HEK293 (cell line): ENCODE measurements at regions of chr17 and their contacts with region 1.

Region 1: DNA sequence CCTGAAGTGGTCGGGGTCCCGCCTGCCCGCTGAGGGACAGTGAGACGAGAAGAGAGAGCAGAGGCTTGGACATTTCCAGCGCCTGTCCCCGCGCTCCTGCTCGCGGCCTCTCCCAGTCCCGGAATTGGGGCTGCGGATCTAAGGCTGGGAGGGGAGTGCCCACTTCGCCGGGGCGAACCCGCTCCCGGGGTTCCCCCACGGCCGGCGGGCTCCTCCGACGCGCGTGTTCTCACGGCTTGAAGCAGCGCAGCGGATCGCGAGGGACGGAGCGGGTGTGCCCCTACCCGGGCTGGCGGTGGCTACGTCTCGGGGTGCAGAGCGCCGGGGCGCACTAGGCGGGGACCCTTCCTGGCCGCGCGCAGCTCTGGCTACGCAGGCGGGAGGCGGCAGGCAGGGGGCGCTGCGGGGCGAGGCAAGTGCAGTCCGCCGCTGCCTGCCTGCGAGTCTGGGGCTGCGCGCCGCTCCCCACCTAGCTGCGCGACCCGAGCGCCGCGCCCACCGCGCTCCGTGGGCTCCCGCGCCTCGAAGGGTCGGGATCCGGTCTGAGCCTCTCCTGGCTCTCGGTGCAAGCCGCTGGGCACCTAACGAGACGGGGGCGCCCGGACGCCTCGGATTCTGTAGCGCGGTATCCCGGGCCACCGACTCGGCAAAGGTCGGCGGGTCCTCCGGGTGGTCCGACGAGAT is 1.2 kb downstream of the NGFR start:
- H3K4me3 ChIP-seq: peak overlapping the region; percentile 51
- H3K27ac ChIP-seq: peak overlapping the region; percentile 27; the same call in 1 of the 2 replicates
- H3K4me1 ChIP-seq: peaks cover 13% of the 10 kb centered on the region
- CTCF ChIP-seq: peak; percentile 85

Region 2: DNA sequence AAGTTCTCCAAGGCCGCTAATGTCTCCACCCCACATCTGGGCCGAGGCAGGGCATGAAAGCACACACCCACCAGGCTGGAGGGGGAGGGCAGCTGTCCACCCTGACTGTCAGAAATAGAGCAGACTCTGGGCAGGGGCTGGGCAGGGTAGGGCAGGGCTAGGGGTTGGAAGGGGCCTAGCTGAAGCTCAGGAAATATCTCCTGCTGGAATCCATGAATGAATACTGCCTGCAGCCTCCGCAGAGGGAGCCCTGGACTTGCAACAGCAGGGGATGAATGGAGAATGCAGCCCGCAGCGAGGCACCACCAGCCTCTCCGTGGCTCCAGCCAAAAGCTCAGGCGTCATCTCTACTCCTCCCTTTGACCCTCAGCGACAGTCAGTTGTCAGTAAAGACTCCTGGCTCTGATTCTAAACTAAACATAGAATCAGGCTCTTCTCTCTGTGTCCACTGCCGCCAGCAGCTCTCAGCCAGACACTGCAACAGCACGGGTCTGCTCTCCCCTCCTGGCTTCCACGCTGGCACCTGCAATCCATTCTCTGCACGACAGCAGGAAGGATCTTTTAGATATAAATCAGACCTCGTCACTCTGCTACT is 25.1 kb before region 1 on chr17:
- CTCF ChIA-PET with region 1: interaction called, 12 read pairs
- POLR2A ChIA-PET with region 1: no interaction called
- H3K4me3 ChIP-seq: no peak overlapping the region
- H3K27ac ChIP-seq: no peak overlapping the region
- H3K4me1 ChIP-seq: no peaks in the 10 kb centered on the region
- CTCF ChIP-seq: no peak

Region 3: GRCh38 chr17:49508061-49508865 is 11.9 kb after region 1 on chr17:
- CTCF ChIA-PET with region 1: interaction called, 59 read pairs
- POLR2A ChIA-PET with region 1: interaction called, 32 read pairs
- H3K4me3 ChIP-seq: peak overlapping the region; percentile 4; the same call in 1 of the 2 replicates
- H3K27ac ChIP-seq: no peak overlapping the region
- H3K4me1 ChIP-seq: peaks cover 10% of the 10 kb centered on the region
- CTCF ChIP-seq: no peak

Region 4: DNA sequence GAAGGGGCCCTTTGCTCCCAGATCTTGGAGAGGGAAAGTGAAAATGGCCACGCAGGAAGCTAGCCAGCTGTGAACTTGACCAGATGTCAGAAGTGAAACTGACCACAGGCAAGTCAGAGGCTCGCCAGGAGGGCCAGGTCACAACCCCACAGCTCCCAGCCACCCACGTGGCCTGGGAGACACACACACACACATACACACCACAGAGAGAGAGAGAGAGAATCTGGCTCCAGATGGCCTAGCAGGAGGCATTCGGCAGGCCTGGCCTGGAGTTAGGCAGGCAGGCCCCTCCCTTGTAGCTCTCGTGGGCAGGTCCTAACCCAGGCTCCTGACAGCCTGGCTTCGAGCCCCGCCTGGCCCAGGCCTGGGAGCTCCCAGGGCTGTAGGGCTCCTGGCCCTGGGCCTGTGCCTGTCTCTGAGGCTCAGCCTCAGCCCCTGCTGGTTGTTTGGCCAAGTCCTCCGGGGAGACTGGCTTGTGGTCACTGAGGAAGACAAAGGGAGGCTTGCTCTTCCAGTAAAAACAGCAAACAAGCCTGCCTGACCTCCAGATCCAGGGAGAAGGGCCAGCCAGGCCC is 19.0 kb after region 1 on chr17:
- CTCF ChIA-PET with region 1: interaction called, 59 read pairs
- POLR2A ChIA-PET with region 1: interaction called, 23 read pairs
- H3K4me3 ChIP-seq: no peak overlapping the region
- H3K27ac ChIP-seq: peak overlapping the region; percentile 38
- H3K4me1 ChIP-seq: no peaks in the 10 kb centered on the region; the same call in 1 of the 2 replicates
- CTCF ChIP-seq: no peak; the same call in 1 of the 2 replicates

Region 5: GRCh38 chr17:49677933-49678847 is 181.9 kb after region 1 on chr17 and contains the start of gene SPOP:
- CTCF ChIA-PET with region 1: no interaction called
- POLR2A ChIA-PET with region 1: interaction called, 11 read pairs
- H3K4me3 ChIP-seq: peak within 1 kb of the TSS; percentile 78
- H3K27ac ChIP-seq: peak within 1 kb of the TSS; percentile 70
- H3K4me1 ChIP-seq: peaks cover 15% of the 10 kb centered on the region; the same call in 1 of the 2 replicates
- CTCF ChIP-seq: no peak

Region 6: GRCh38 chr17:49688848-49689247 is 192.5 kb after region 1 on chr17:
- CTCF ChIA-PET with region 1: no interaction called
- POLR2A ChIA-PET with region 1: no interaction called
- H3K4me3 ChIP-seq: no peak overlapping the region
- H3K27ac ChIP-seq: no peak overlapping the region
- H3K4me1 ChIP-seq: no peaks in the 10 kb centered on the region
- CTCF ChIP-seq: no peak